ENCODE measurements at regions of chr20 and their contacts with region 1.

Region 1: DNA sequence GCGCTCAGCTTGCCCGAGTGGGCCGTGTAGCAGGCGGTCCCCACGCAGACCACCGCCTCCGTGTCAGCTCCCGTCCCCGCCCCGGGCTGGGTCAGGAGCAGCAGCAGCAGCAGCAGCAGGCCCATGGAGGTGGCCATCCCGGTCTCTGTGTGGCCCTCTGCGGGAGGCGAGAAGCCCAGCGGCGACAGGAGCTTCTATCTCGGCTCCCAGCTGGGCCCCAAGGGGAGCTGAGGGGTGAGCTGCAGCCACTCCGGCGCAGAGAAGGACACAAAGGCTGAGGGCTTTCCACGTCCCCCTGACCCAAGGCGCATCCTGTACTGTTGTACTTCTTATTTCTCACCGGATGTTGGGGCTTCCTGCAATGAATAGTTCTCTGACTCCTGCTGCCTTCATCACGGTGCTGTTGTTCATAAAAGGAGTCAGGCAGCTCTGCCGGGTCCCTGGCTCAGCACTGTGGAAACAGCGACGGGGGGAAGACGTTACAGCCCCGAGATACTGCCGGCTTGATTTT is at the start of gene CD93:
- DNase-seq: peak; percentile 64 to 78 (median 76)
- ATAC-seq: peak; percentile 59 to 83 (median 74)
- H3K4me3 ChIP-seq: peak within 1 kb of the TSS; percentile 27 to 70 (median 60)
- H3K27ac ChIP-seq: peak within 1 kb of the TSS; percentile 81 to 99 (median 97)
- H3K4me1 ChIP-seq: peaks cover 0 to 54% (median 25%) of the 10 kb centered on the region in 12 donors
- H3K27me3 ChIP-seq: no peaks in the 10 kb centered on the region
- CTCF ChIP-seq: no peak
- POLR2A ChIP-seq: peak in 1 of 2 donors; percentile 53
- total RNA-seq, gene CD93: 29.6 to 110 (median 45.7) TPM

Region 2: DNA sequence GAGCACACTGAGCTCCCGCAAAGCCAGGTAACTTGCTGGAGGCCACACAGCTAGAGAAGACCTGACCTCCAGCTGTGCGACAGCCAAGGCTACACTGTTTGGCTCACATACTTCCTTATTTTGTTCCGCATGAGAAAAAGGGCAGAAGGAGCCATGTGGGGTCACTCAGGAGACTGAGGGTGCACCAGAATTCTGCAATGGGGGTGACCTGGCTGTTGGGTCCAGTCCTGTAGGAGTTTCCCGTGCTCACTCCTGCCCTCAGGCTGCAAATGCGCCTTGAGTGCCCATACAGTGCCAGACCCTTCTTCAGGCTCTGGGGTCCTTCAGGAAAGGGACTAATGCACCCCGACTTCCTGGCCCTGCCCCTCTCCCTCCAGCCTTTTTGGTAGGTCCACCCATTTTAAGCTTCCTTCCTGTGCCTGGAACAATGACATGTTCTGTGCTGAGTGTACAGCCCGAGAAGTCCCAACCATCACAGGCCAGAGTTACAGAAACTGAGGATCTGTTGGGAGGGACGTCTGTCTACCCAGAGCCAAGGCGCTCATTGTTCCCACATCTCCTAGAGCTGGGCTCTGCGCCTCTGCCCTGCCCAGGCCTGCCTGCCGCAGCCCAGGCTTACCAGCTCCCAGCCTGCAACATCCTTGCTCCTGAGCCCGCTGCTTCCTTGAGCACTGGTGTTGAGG is 33.5 kb after region 1 on chr20:
- intact Hi-C with region 1: loop called in 1 of 10 experiments (anchors 1 kb)
- DNase-seq: peak in 3 of 5 donors; percentile 46 to 57 (median 52)
- ATAC-seq: peak; percentile 76 to 86 (median 81)
- H3K4me3 ChIP-seq: no peak overlapping the region
- H3K27ac ChIP-seq: peak overlapping the region; percentile 47 to 78 (median 63)
- H3K4me1 ChIP-seq: peaks cover 0 to 61% (median 18%) of the 10 kb centered on the region in 12 donors
- H3K27me3 ChIP-seq: no peaks in the 10 kb centered on the region
- CTCF ChIP-seq: no peak
- POLR2A ChIP-seq: no peak

Region 3: GRCh38 chr20:23132930-23133559 is 46.9 kb after region 1 on chr20:
- intact Hi-C with region 1: loop called in 4 of 10 experiments (anchors 5 to 10 kb)
- DNase-seq: peak in 4 of 5 donors; percentile 70 to 80 (median 74)
- ATAC-seq: peak; percentile 62 to 90 (median 79)
- H3K4me3 ChIP-seq: peak overlapping the region in 1 of 12 donors; percentile 3
- H3K27ac ChIP-seq: peak overlapping the region; percentile 23 to 86 (median 76)
- H3K4me1 ChIP-seq: peaks cover 3 to 86% (median 41%) of the 10 kb centered on the region in 12 donors
- H3K27me3 ChIP-seq: no peaks in the 10 kb centered on the region
- CTCF ChIP-seq: no peak
- POLR2A ChIP-seq: no peak

Region 4: DNA sequence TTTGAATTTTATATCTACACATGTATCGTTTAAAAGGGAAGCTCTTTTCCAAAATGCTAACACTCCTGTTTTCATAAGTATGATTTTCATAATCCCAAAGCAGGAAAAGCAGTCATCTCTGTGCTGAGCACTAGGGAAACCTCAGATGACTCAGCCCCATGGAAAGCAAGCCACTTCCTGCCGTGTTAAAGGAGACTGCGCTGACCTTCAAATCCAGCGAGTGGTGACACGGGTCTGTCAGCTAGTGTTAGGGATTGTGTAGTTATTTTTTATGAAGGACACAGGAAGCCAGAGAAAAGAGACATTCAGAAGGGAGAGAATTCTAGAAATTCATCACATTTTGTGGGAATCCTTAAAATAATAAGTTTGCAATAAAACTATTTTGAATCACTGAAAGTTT is 57.0 kb after region 1 on chr20:
- intact Hi-C with region 1: loop called in 3 of 10 experiments (anchors 1 to 10 kb)
- DNase-seq: peak in 4 of 5 donors; percentile 74 to 87 (median 80)
- ATAC-seq: peak; percentile 84 to 95 (median 90)
- H3K4me3 ChIP-seq: no peak overlapping the region
- H3K27ac ChIP-seq: peak overlapping the region; percentile 47 to 97 (median 70)
- H3K4me1 ChIP-seq: peaks cover 9 to 79% (median 26%) of the 10 kb centered on the region in 12 donors
- H3K27me3 ChIP-seq: no peaks in the 10 kb centered on the region
- CTCF ChIP-seq: no peak
- POLR2A ChIP-seq: no peak

Region 5: GRCh38 chr20:23178806-23179205 is 92.7 kb after region 1 on chr20:
- intact Hi-C with region 1: loop called in 3 of 10 experiments (anchors 2 to 10 kb)
- DNase-seq: peak in 3 of 5 donors; percentile 51 to 68 (median 67)
- ATAC-seq: peak; percentile 33 to 85 (median 69)
- H3K4me3 ChIP-seq: no peak overlapping the region
- H3K27ac ChIP-seq: peak overlapping the region in 10 of 12 donors; percentile 57 to 84 (median 68)
- H3K4me1 ChIP-seq: peaks cover 0 to 33% (median 14%) of the 10 kb centered on the region in 12 donors
- H3K27me3 ChIP-seq: no peaks in the 10 kb centered on the region
- CTCF ChIP-seq: peak; percentile 29 to 61 (median 50)
- POLR2A ChIP-seq: no peak

Region 6: GRCh38 chr20:23200918-23201317 is 114.8 kb after region 1 on chr20:
- intact Hi-C with region 1: loop called in 1 of 10 experiments (anchors 5 kb)
- DNase-seq: peak in 3 of 5 donors; percentile 49 to 58 (median 50)
- ATAC-seq: peak in 3 of 4 donors; percentile 33 to 53 (median 42)
- H3K4me3 ChIP-seq: no peak overlapping the region
- H3K27ac ChIP-seq: no peak overlapping the region
- H3K4me1 ChIP-seq: peaks cover 9 to 52% (median 28%) of the 10 kb centered on the region in 12 donors
- H3K27me3 ChIP-seq: no peaks in the 10 kb centered on the region
- CTCF ChIP-seq: peak; percentile 10 to 58 (median 40)
- POLR2A ChIP-seq: no peak

Measured in heart left ventricle (tissue), 16 donors.